ENCODE measurements at regions of chr3 and their contacts with region 1.

Region 1: DNA sequence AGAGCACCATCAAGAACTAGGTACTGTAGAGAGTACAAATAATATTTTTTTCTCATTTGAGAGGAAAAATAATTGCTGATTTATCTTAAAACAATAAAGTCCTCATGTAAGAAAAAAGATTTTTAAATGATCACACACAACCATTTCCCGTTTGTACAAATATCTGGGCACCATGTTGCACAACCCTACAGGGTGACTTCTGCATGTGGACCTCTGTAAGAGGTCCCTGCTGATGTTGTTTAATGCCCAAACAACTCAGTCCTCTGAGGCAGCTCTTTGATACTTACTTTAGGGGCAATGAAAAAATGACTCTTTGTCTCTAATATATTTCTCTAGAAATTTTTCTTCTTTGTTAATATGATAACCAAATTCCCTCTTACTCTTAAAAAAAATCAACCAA is 168.1 kb upstream of the SATB1 start:
- DNase-seq: no peak
- H3K4me3 Mint-ChIP-seq: no peak overlapping the region
- H3K27ac Mint-ChIP-seq: no peak overlapping the region
- H3K4me1 Mint-ChIP-seq: no peaks in the 10 kb centered on the region
- H3K27me3 Mint-ChIP-seq: no peaks in the 10 kb centered on the region

Region 2: DNA sequence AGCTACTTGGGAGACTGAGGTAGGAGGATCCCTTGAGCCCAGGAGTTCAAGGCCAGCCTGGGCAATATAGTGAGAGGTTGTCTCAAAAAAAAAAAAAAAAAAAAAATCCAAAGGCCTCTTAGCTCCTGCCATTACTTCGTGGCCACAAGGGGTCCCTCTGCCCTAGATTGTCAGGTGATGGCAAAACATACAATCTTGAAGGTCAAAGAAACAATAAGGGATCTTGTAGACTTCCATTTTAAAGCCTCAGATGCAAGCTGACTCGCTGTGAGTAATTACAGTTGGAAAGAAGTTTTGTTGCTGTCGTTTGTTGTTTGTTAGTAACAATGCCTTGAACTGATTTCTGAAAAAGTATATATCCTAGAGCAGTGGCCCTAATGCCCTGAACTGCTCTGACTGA is 1764.4 kb before region 1 on chr3:
- intact Hi-C with region 1: no loop called
- DNase-seq: peak; percentile 22
- H3K4me3 Mint-ChIP-seq: no peak overlapping the region
- H3K27ac Mint-ChIP-seq: no peak overlapping the region
- H3K4me1 Mint-ChIP-seq: peaks cover 21% of the 10 kb centered on the region
- H3K27me3 Mint-ChIP-seq: peaks cover 17% of the 10 kb centered on the region

Region 3: DNA sequence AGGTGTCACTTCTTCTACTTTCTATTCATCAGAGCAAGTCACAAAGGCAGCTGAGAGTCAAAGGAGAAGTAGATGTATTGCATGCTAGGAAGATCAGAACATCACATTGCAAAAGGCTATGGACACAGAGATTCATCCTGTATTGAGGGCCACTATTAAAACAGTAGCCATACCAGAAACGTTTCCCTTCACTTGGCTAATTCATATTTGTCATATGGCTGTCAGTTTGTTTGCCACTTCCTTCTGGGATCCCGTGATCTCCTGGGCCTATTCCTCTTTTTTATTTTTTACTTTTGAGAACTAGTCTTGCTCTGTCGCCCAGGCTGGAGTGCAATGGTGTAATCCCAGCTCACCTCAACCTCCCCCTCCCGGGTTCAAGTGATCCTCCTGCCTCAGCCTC is 16.0 kb after region 1 on chr3:
- intact Hi-C with region 1: loop called (anchors 2 kb)
- DNase-seq: no peak
- H3K4me3 Mint-ChIP-seq: no peak overlapping the region
- H3K27ac Mint-ChIP-seq: no peak overlapping the region
- H3K4me1 Mint-ChIP-seq: peaks cover 5% of the 10 kb centered on the region
- H3K27me3 Mint-ChIP-seq: no peaks in the 10 kb centered on the region

Measured in activated T-helper 1 cell treated with anti-CD3 and anti-CD28 coated beads, Interleukin-12 subunit alpha, Interleukin-12 subunit beta, Interleukin-2, Interleukin-4 antibody, amounts not matched to agents 30 ng/mL and 10 ng/mL and 1 ng/mL, durations not matched to agents 14 hours and 24 hours and 36 hours (primary cell).